CD4-positive, alpha-beta T cell (primary cell): ENCODE measurements at regions of chr17 and their contacts with region 1.

Region 1: GRCh38 chr17:76557368-76558197 is 17.7 kb downstream of the PRCD start:
- DNase-seq: peak; percentile 86 to 97 (median 90)
- ATAC-seq: peak; percentile 82
- H3K4me3 ChIP-seq: peak overlapping the region; percentile 95
- H3K4me3 Mint-ChIP-seq: peak overlapping the region; percentile 96
- H3K27ac ChIP-seq: peak overlapping the region; percentile 93 to 97
- H3K27ac Mint-ChIP-seq: peak overlapping the region; percentile 97
- H3K4me1 ChIP-seq: peaks cover 58% of the 10 kb centered on the region
- H3K4me1 Mint-ChIP-seq: peaks cover 58% of the 10 kb centered on the region
- H3K27me3 ChIP-seq: no peaks in the 10 kb centered on the region
- H3K27me3 Mint-ChIP-seq: no peaks in the 10 kb centered on the region
- CTCF ChIP-seq: peak; percentile 35

Region 2: GRCh38 chr17:76515274-76515949 is 42.2 kb before region 1 on chr17:
- CTCF ChIA-PET with region 1: interaction called, 3 read pairs
- POLR2A ChIA-PET with region 1: interaction called, 4 read pairs
- intact Hi-C with region 1: loop called in 1 of 2 experiments (anchors 5 kb)
- DNase-seq: peak; percentile 71 to 98 (median 80)
- ATAC-seq: peak; percentile 82
- H3K4me3 ChIP-seq: peak overlapping the region; percentile 34
- H3K4me3 Mint-ChIP-seq: peak overlapping the region; percentile 78
- H3K27ac ChIP-seq: peak overlapping the region; percentile 83 to 84
- H3K27ac Mint-ChIP-seq: peak overlapping the region; percentile 98
- H3K4me1 ChIP-seq: peaks cover 86% of the 10 kb centered on the region
- H3K4me1 Mint-ChIP-seq: peaks cover 37% of the 10 kb centered on the region
- H3K27me3 ChIP-seq: no peaks in the 10 kb centered on the region
- H3K27me3 Mint-ChIP-seq: no peaks in the 10 kb centered on the region
- CTCF ChIP-seq: no peak

Region 3: DNA sequence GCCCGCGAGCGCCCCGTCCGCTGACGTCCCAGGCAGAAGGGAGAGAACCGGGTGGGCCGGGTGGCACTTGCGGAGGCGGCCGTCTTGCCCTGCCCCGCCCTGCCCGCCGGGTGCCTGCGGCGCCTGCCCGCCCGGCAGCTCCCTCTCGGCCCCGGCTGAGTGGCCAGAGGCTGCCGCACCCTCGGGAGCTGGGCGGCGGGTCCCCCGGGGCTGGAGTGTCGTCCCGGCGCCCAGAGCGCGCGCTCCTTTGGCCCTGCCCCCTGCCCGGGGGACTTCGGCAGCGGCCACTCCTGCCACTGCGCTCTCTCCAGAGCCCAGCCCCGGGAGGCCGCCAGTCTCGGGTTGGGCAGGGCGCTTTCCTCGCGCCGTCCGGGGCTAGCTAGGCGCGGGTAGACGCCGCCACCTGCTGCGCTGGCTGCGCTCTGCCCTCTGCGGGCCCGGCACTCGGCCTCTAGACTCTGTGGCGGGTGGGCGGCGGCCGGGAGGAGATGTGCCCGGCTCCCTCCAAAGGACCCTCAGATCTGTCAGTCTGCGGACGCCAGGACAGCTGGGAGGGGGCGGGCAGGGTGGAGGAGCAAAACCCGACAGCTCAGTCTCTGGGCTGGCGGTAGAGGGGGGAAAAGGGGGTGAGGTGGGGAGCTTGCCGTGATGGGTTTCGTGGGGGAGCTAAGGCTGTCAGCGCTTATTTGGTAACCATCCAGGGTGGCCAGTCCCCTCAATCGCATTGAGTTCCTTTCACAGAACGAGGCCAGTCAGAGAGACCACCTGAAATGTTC is 28.4 kb after region 1 on chr17 and contains the start of gene ST6GALNAC2:
- CTCF ChIA-PET with region 1: interaction called, 17 read pairs
- POLR2A ChIA-PET with region 1: interaction called, 5 read pairs
- intact Hi-C with region 1: no loop called
- DNase-seq: peak in 12 of 14 experiments; percentile 11 to 75 (median 30)
- ATAC-seq: peak; percentile 75
- H3K4me3 ChIP-seq: peak within 1 kb of the TSS; percentile 56
- H3K4me3 Mint-ChIP-seq: peak within 1 kb of the TSS; percentile 79
- H3K27ac ChIP-seq: no peak within 1 kb of the TSS
- H3K27ac Mint-ChIP-seq: no peak within 1 kb of the TSS
- H3K4me1 ChIP-seq: peaks cover 26% of the 10 kb centered on the region
- H3K4me1 Mint-ChIP-seq: peaks cover 9% of the 10 kb centered on the region
- H3K27me3 ChIP-seq: peaks cover 31 to 49% of the 10 kb centered on the region in 2 experiments
- H3K27me3 Mint-ChIP-seq: peaks cover 59% of the 10 kb centered on the region
- CTCF ChIP-seq: no peak
- total RNA-seq, gene ST6GALNAC2: 0.49 to 1.2 TPM

Region 4: GRCh38 chr17:76671123-76671911 is 113.7 kb after region 1 on chr17:
- CTCF ChIA-PET with region 1: interaction called, 7 read pairs
- POLR2A ChIA-PET with region 1: interaction called, 17 read pairs
- intact Hi-C with region 1: loop called in 1 of 2 experiments (anchors 5 kb)
- DNase-seq: peak; percentile 95 to 100 (median 98)
- ATAC-seq: peak; percentile 98
- H3K4me3 ChIP-seq: peak overlapping the region; percentile 69
- H3K4me3 Mint-ChIP-seq: peak overlapping the region; percentile 88
- H3K27ac ChIP-seq: peak overlapping the region; percentile 72 to 81
- H3K27ac Mint-ChIP-seq: peak overlapping the region; percentile 93
- H3K4me1 ChIP-seq: peaks cover 30% of the 10 kb centered on the region
- H3K4me1 Mint-ChIP-seq: peaks cover 35% of the 10 kb centered on the region
- H3K27me3 ChIP-seq: no peaks in the 10 kb centered on the region
- H3K27me3 Mint-ChIP-seq: no peaks in the 10 kb centered on the region
- CTCF ChIP-seq: no peak

Region 5: DNA sequence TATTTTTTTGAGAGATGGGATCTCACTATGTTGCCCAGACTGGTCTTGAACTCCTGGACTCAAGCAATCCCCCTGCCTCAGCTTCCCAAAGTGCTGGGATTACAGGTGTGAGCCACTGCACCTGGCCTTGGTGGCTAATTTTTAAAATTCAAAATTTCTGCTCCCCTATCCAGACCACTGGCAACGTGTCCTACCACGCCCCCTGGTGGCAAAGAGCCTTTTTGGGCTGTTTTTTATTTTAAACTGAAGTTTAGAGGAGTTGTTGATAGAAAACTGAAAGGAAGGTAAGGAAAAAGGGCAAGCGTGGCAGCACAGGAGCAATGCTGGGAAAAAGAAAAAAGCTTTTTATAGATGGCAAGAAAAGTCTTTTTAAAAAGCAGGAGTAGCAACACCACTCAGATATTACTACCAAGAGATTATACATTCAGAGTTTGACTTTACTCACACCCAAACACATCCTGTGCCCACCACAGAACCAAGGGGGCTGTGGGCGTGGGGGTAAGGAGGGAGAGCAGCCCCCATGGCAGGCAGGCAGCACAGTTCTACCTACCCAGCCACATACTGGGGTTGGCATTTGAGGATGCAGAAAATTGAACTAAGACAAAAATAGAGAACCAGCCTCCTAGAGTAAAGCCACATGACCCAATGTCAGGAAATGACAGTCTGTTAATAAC is 157.4 kb after region 1 on chr17:
- CTCF ChIA-PET with region 1: interaction called, 3 read pairs
- POLR2A ChIA-PET with region 1: interaction called, 3 read pairs
- intact Hi-C with region 1: loop called (anchors 2 kb)
- DNase-seq: peak; percentile 64 to 87 (median 79)
- ATAC-seq: no peak
- H3K4me3 ChIP-seq: no peak overlapping the region
- H3K4me3 Mint-ChIP-seq: peak overlapping the region; percentile 3
- H3K27ac ChIP-seq: no peak overlapping the region
- H3K27ac Mint-ChIP-seq: peak overlapping the region; percentile 96
- H3K4me1 ChIP-seq: peaks cover 33% of the 10 kb centered on the region
- H3K4me1 Mint-ChIP-seq: peaks cover 42% of the 10 kb centered on the region
- H3K27me3 ChIP-seq: no peaks in the 10 kb centered on the region
- H3K27me3 Mint-ChIP-seq: no peaks in the 10 kb centered on the region
- CTCF ChIP-seq: peak; percentile 88

Region 6: DNA sequence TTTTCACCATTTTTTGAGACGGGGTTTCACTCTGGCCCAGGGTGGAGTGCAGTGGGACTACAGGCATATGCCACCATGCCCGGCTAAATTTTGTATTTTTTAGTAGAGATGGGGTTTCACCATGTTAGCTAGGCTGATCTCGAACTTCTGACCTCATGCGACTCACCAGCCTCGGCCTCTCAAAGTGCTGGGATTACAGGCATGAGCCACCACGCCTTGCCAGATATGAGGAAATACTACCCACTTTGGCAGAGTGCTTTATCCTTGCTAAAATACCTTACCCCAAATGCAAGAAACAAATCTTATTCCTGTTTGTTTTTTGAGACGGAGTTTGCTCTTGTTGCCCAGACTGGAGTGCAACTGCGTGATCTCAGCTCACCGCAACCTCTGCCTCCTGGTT is 247.7 kb after region 1 on chr17:
- CTCF ChIA-PET with region 1: no interaction called
- POLR2A ChIA-PET with region 1: no interaction called
- intact Hi-C with region 1: no loop called
- DNase-seq: no peak
- ATAC-seq: no peak
- H3K4me3 ChIP-seq: no peak overlapping the region
- H3K4me3 Mint-ChIP-seq: no peak overlapping the region
- H3K27ac ChIP-seq: no peak overlapping the region
- H3K27ac Mint-ChIP-seq: no peak overlapping the region
- H3K4me1 ChIP-seq: no peaks in the 10 kb centered on the region
- H3K4me1 Mint-ChIP-seq: no peaks in the 10 kb centered on the region
- H3K27me3 ChIP-seq: no peaks in the 10 kb centered on the region
- H3K27me3 Mint-ChIP-seq: no peaks in the 10 kb centered on the region
- CTCF ChIP-seq: no peak